Vagina (tissue), 2 donors: ENCODE measurements at regions of chr2 and their contacts with region 1.

Region 1: DNA sequence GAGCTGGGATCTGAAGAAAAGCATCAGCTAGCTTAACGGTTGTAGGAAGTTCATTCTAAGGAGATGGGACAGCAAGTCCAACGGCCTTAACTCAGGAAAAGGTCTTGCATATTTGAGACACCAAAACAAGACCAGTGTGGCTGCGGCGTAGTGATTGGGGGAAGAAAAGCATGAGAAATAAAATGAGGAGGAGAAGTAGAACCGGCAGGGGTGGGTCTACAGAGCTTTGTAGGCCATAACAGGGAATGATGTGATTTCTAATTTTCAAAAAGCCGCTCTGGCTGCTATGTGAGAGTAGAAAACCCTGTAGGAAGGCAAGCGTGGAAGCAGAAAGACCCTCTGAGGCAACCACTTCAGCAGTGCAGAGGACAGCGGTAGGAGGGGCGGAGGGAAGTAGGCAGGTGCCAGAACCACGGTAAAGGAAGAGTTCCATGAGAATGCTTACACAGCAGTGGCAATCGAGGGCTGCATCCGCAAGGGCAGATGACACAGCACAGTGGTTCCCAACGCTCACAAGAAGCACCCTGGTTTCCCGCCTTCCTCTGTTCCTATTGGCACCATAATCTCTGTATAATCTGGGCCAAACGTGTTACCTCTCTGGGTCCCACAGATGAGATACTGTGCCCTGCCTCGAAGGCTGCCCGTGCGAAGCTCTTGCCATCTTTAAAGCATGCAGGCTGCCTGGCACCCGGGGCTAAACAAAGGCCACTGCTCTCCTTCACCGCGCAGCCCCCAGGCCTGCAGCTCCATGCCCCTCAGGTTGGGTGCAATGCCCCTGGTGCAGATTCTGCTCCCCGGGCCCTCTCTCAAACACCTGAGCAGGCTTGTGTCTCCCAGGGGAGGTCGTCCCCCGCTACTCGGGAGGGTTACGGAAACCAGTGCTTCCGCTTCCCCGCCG is 791 bp downstream of the ANKRD39 start:
- DNase-seq: no peak
- H3K4me3 ChIP-seq: peak overlapping the region; percentile 63 to 87
- H3K27ac ChIP-seq: peak overlapping the region; percentile 79
- H3K4me1 ChIP-seq: peaks cover 49% of the 10 kb centered on the region
- H3K27me3 ChIP-seq: no peaks in the 10 kb centered on the region
- CTCF ChIP-seq: no peak
- POLR2A ChIP-seq: no peak

Region 2: DNA sequence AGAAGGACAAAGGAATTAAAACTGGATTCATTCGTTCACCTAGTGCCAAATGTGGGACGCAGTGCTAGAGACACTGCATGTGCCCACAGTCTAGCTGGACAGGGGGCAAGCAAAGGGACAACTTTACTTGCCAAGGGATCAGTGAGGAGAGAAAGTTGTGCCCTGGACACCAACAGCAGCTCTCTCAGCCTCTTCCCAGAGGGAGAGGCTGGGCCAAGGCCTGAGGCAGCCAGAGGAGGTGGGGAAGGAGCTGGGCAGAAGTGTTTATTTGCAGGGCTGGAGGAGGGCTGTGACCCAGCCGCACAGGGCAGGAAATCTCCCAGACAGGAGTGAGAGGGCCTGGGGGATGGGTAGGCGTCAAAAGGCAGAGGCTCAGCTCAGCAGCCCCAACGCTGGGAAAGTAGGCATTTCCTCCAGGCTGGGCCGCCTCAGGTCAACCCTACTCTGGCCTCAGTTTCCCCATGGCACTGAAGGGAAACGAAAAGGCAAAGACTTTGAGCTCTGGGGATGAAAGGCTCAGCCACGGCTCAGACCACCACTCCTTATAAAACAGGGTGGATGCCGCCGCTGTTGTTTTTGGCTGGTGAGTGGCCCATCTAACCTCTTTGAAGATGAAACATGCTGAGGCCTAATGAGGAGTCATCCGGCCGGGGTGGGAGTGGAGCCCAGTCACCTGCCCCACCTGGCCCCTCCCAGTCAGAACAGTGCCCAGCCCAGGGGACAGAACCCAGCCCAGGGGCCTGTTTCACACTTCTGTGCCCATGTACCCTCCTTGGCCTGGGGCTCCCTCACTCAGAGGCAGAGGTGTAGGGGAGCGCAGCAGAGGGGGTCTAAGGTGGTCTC is 34.7 kb after region 1 on chr2:
- intact Hi-C with region 1: no loop called
- DNase-seq: no peak
- H3K4me3 ChIP-seq: no peak overlapping the region
- H3K27ac ChIP-seq: peak overlapping the region; percentile 43
- H3K4me1 ChIP-seq: peaks cover 84% of the 10 kb centered on the region
- H3K27me3 ChIP-seq: no peaks in the 10 kb centered on the region
- CTCF ChIP-seq: no peak
- POLR2A ChIP-seq: no peak

Region 3: DNA sequence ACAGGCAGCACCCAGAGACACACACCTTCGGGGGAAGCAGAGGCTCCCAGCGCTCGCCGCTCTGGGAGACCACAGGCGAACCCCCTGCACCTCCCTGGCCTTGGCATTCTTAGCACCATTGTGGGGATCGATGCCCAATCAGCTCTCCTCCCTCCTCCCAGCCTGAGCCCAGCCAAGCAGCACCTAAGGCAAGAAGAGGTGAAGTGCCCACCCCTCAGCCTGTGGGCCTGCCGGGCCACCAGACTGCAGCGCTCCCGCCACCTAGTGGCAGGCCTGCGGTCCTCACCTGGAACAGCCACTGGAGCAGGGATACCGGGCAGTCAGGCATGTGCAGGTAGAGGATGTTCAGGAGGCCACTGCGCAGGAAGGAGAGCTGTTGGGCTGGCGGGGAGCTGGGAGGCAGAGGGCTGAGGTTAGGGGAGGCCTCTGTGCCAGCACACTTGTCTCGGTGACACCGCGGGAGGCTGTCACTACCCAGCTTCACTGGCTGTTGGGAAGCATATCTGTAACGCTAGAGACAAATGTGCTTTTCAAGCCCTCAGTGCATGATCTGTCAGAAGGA is 94.1 kb after region 1 on chr2:
- intact Hi-C with region 1: loop called (anchors 2 kb)
- DNase-seq: no peak
- H3K4me3 ChIP-seq: no peak overlapping the region
- H3K27ac ChIP-seq: peak overlapping the region; percentile 79
- H3K4me1 ChIP-seq: peaks cover 44% of the 10 kb centered on the region
- H3K27me3 ChIP-seq: no peaks in the 10 kb centered on the region
- CTCF ChIP-seq: peak; percentile 73 to 95 (median 87)
- POLR2A ChIP-seq: no peak

Region 4: GRCh38 chr2:96992266-96992665 is 135.2 kb after region 1 on chr2:
- intact Hi-C with region 1: no loop called
- DNase-seq: no peak
- H3K4me3 ChIP-seq: no peak overlapping the region
- H3K27ac ChIP-seq: no peak overlapping the region
- H3K4me1 ChIP-seq: no peaks in the 10 kb centered on the region
- H3K27me3 ChIP-seq: no peaks in the 10 kb centered on the region
- CTCF ChIP-seq: no peak
- POLR2A ChIP-seq: no peak

Region 5: DNA sequence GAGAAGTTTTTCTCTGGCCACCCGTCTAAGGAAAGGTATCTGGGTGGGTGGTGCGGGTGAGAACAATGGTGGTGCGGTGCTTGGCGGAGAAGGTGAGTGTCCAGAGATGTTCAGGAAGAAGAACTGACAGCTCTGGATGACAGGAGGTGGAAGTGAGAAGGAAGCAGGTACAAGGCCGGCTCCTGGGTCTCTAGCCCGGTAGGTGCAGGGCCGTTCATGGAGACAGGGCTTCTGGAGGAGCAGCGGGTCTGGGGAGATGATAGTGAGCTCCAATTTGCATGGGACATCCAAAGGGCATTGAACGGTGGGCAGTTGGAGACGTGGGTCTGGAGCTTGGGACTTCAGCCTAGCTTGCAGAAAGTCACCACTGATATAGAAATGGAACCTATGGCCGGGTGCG is 238.6 kb after region 1 on chr2:
- intact Hi-C with region 1: no loop called
- DNase-seq: no peak
- H3K4me3 ChIP-seq: peak overlapping the region; percentile 48
- H3K27ac ChIP-seq: peak overlapping the region; percentile 66
- H3K4me1 ChIP-seq: peaks cover 8% of the 10 kb centered on the region
- H3K27me3 ChIP-seq: no peaks in the 10 kb centered on the region
- CTCF ChIP-seq: no peak
- POLR2A ChIP-seq: no peak